ENCODE measurements at regions of chr2 and their contacts with region 1.

Region 1: GRCh38 chr2:109613922-109614714 is at the starts of genes SEPTIN10 and SOWAHC:
- DNase-seq: peak; percentile 93
- H3K27ac ChIP-seq: peak within 1 kb of the TSS; percentile 100
- CTCF ChIP-seq: no peak

Region 2: DNA sequence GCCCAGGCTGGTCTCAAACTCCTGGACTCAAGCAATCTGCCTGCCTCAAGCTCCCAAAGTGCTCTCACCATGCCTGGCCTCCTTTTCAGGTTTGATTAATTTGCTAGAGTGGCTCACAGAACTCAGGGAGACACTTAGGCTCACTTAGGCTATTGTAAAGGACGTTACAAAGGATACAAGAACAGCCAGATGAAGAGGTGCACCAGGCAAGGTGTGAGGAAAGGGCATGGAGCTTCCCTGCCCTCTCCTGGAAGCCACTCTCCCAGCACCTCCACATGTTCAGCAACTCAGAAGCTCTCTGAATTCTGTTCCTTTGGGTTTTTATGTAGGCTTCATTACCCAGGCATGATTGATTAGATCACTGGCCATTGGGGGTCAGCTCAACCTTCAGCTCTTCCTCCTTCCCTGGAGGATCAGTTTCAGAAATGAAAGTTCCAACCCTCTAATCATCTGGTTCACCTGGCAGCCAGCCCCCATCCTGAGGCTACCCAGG is 101.2 kb after region 1 on chr2:
- CTCF ChIA-PET with region 1: interaction called, 20 read pairs
- POLR2A ChIA-PET with region 1: no interaction called
- DNase-seq: peak; percentile 55
- H3K27ac ChIP-seq: no peak overlapping the region
- CTCF ChIP-seq: peak; percentile 56

Measured in RWPE1 (cell line).